Dendritic cell treated with granulocyte-macrophage colony-stimulating factor and Interleukin-4, amounts not matched to agents 40 ng/mL and 50 ng/mL, for 4 days (primary cell): ENCODE measurements at regions of chr5 and their contacts with region 1.

Region 1: DNA sequence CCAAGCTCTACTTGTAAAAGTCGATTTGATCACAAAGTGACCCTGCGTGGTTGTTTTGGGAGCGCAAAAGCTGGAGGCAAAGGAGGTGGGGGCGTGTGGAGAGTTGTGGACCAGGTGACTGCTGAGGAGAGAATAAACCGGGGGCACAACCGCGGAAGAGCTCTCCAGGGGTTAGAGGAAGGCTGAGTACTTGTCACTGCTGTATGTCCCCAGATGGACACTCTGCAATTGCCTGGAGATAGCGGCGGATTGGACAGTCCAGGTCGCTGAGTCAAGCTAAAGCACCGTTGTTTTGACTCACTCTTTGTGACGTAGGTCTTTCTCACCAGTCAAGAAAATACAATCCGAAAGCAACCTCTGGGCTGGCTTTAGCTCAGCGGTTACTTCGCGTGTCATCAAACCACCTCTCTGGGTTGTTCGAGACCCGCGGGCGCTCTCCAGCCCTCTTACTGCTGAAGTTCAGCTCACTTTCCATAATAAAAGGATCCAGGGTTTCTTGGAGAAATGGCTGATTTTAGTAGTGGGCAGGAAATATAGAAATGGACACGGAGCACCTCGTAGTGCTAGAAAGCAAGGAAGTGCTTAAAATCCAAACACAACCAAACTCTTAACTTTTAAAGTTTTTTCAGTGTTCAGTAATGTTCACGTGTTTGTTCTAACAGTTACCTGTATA is 25.7 kb downstream of the ZMAT2 start:
- H3K4me3 Mint-ChIP-seq: no peak overlapping the region
- H3K27ac Mint-ChIP-seq: no peak overlapping the region
- H3K4me1 Mint-ChIP-seq: peaks cover 9% of the 10 kb centered on the region
- H3K27me3 Mint-ChIP-seq: peaks cover 43% of the 10 kb centered on the region

Region 2: GRCh38 chr5:140362860-140363630 is 362.9 kb before region 1 on chr5:
- intact Hi-C with region 1: loop called (anchors 2 kb)
- H3K4me3 Mint-ChIP-seq: peak overlapping the region; percentile 49
- H3K27ac Mint-ChIP-seq: no peak overlapping the region
- H3K4me1 Mint-ChIP-seq: peaks cover 5% of the 10 kb centered on the region
- H3K27me3 Mint-ChIP-seq: peaks cover 9% of the 10 kb centered on the region